ENCODE measurements at regions of chr1 and their contacts with region 1.

Region 1: DNA sequence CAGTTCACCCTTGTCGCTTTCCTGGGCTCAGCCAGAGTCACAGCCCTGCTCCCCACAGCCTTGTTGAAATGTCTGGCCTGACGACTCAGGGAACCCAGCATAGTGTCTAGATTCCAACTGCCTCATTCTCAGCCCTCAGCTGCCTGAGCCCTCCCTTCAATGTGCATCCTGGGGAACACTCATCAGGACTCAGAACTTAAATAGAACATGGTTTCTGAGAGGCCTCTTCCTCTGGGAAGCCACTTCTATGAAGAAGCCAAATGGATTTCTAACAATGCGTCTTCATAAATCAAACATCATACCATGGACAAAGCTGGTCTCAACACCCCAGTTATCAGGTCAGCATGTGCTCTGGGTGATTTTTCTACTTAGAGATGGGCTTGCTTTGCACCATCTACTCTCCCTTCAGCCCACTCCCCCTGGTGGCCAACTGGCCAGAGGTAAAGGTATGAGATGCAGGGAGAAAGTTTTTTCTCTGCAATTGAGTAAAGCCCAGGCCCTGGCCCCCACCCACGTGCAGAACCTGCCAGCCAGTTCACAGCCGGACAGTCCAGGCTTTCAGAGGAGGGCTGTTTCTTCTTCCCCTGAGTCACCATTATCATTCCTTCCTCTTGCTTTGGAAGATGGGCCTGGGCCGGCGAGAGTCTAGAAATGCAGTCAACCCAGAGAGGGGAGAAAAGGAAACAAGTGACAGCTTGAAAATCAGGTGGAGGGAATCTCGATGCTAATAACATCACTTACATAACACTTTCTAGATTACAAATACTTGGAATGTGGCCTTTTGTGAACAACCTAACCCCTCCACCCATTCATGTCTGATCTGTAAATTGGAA is 32.1 kb downstream of the CD244 start:
- DNase-seq: peak; percentile 62 to 75 (median 70)
- H3K4me3 ChIP-seq: no peak overlapping the region
- H3K4me3 Mint-ChIP-seq: no peak overlapping the region
- H3K27ac ChIP-seq: no peak overlapping the region
- H3K27ac Mint-ChIP-seq: peak overlapping the region in 6 of 7 donors; percentile 74 to 86 (median 82)
- H3K4me1 ChIP-seq: peaks cover 6% of the 10 kb centered on the region
- H3K4me1 Mint-ChIP-seq: peaks cover 13 to 35% (median 24%) of the 10 kb centered on the region in 4 donors
- H3K27me3 ChIP-seq: no peaks in the 10 kb centered on the region
- H3K27me3 Mint-ChIP-seq: no peaks in the 10 kb centered on the region

Region 2: DNA sequence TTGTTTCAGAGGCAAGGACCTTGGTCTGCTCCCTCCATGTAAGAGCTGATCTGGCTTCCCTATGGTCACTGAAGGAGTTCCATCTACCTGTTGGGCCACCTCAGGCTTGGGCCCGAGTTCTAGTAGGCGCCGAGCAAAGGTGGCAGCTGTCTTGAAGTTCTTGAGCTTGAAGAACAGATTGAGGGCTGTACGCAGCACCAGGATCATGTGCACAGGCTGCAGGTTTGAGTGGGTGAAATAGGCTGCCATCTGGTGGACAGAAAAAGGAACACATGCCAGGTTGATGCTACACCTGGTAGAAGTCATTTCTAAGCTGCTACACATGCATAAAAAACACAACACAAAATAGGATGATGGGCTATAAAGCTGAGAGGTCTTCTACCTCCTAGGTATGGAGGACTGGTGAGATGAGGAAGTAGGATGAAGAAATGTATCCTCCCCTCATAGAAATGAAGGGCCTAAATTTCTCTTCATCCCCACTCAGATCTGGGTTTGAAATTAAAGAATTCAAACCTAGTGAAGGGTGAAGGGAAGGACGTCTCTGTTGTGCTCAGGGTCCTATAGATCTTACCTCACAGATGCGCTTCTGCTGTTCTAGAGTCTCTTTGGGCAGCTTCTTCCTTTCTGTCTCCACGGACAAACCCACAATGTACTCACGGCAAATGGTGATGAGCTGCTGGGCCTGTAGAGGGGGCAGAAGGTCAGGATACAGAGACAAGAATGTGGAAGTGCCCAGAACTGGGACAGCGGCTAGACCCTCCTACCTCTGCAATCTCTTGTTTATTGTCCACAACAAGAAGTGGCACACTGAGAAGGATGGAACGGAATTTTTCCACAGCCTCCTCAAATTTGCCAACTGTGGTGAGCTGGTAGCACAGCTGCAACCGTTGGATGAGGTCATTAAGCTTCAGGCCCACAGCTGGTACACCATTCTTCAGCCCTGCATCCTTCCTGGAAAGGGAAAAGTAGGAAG is 539.0 kb before region 1 on chr1:
- CTCF ChIA-PET with region 1: no interaction called
- POLR2A ChIA-PET with region 1: no interaction called
- intact Hi-C with region 1: no loop called
- DNase-seq: peak; percentile 75 to 79 (median 76)
- H3K4me3 ChIP-seq: no peak overlapping the region
- H3K4me3 Mint-ChIP-seq: no peak overlapping the region
- H3K27ac ChIP-seq: no peak overlapping the region
- H3K27ac Mint-ChIP-seq: peak overlapping the region; percentile 0 to 90 (median 77)
- H3K4me1 ChIP-seq: no peaks in the 10 kb centered on the region
- H3K4me1 Mint-ChIP-seq: peaks cover 4 to 10% (median 4%) of the 10 kb centered on the region in 4 donors
- H3K27me3 ChIP-seq: no peaks in the 10 kb centered on the region
- H3K27me3 Mint-ChIP-seq: no peaks in the 10 kb centered on the region

Region 3: GRCh38 chr1:160726498-160727315 is 103.8 kb before region 1 on chr1:
- CTCF ChIA-PET with region 1: interaction called, 45 read pairs
- POLR2A ChIA-PET with region 1: interaction called, 5 read pairs
- intact Hi-C with region 1: loop called (anchors 1 kb)
- DNase-seq: peak; percentile 67 to 76 (median 74)
- H3K4me3 ChIP-seq: no peak overlapping the region
- H3K4me3 Mint-ChIP-seq: no peak overlapping the region
- H3K27ac ChIP-seq: no peak overlapping the region
- H3K27ac Mint-ChIP-seq: no peak overlapping the region
- H3K4me1 ChIP-seq: peaks cover 24% of the 10 kb centered on the region
- H3K4me1 Mint-ChIP-seq: peaks cover 11 to 20% (median 15%) of the 10 kb centered on the region in 4 donors
- H3K27me3 ChIP-seq: no peaks in the 10 kb centered on the region
- H3K27me3 Mint-ChIP-seq: no peaks in the 10 kb centered on the region

Region 4: GRCh38 chr1:161132410-161133219 is 302.1 kb after region 1 on chr1 and contains the start of gene DEDD:
- CTCF ChIA-PET with region 1: no interaction called
- POLR2A ChIA-PET with region 1: no interaction called
- intact Hi-C with region 1: no loop called
- DNase-seq: peak; percentile 92 to 95 (median 93)
- H3K4me3 ChIP-seq: peak within 1 kb of the TSS; percentile 80 to 100
- H3K4me3 Mint-ChIP-seq: peak within 1 kb of the TSS in 1 of 8 donors; percentile 91
- H3K27ac ChIP-seq: peak within 1 kb of the TSS; percentile 95
- H3K27ac Mint-ChIP-seq: peak within 1 kb of the TSS in 3 of 7 donors; percentile 91 to 99 (median 95)
- H3K4me1 ChIP-seq: peaks cover 51% of the 10 kb centered on the region
- H3K4me1 Mint-ChIP-seq: peaks cover 29 to 43% (median 40%) of the 10 kb centered on the region in 4 donors
- H3K27me3 ChIP-seq: no peaks in the 10 kb centered on the region
- H3K27me3 Mint-ChIP-seq: no peaks in the 10 kb centered on the region
- total RNA-seq, gene DEDD: 39.1 to 41.4 TPM

Measured in CD4-positive, alpha-beta memory T cell (primary cell).